Spleen (tissue), 13 donors: ENCODE measurements at regions of chr1 and their contacts with region 1.

Region 1: DNA sequence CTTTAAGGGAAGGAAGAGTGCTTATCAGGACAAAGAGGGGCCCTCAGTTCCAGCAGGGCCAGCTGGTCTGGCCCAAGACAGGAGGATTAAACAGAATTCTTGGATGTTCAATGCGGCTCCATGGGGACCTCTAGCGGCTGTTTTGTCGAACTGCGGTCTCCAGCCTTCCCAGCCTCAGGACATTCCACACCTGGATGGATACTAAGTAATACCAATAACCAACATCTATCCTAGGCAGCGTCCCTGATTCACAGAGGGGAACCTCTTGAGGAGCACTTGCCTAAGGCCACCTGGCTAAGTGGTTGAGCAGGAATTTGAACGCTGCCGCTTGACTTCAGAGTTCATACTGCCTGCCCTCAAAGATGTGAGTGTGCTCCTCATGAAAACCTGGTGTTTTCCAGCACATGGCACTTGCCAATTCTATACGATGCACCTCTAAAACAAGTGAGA is 15.5 kb upstream of the CD247 start:
- DNase-seq: peak; percentile 80
- H3K4me3 ChIP-seq: no peak overlapping the region
- H3K27ac ChIP-seq: no peak overlapping the region
- H3K4me1 ChIP-seq: peaks cover 0 to 5% (median 2%) of the 10 kb centered on the region in 6 donors
- H3K27me3 ChIP-seq: no peaks in the 10 kb centered on the region
- CTCF ChIP-seq: peak; percentile 48 to 93 (median 85)
- POLR2A ChIP-seq: no peak

Region 2: DNA sequence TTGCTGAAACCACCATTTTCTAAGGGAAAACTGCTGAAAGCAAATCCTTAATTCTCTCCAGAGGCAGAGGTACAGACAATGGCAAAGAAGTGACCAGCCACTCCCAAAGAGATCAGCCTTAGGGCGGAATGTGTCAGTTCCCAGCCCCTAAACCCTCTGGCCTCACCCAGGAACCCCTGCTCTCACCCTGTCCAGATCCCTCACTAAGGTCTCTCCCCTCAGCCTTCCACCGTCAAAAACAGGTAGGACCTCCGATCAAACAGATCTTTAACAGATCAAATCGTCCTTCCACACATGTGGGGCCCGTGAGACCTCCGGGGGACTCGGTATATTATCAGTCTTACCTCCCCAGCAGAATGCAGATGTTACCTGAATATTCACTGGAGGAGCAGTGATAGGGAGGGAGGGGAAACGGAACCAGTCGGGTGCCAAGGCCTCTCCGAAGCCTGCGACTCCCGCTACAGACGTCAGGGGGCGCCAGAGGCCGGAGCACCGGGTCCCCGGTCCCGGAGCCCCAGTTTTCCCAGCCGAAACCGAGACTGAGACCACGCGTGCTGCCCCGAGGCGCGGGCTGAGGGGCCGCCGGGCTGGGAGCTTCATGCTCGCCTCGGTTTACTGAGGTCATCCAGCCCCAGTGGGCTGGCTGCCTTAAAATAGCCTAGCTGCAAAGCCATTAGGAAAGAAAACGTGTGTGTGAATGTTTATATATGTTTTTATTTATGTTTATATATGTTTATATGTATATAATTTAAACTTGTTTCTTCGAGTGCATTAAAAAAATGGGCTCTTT is 467.3 kb before region 1 on chr1:
- intact Hi-C with region 1: loop called (anchors 5 kb)
- DNase-seq: peak; percentile 96
- H3K4me3 ChIP-seq: peak overlapping the region in 3 of 8 donors; percentile 14 to 52 (median 25)
- H3K27ac ChIP-seq: no peak overlapping the region
- H3K4me1 ChIP-seq: peaks cover 0 to 11% (median 5%) of the 10 kb centered on the region in 6 donors
- H3K27me3 ChIP-seq: no peaks in the 10 kb centered on the region
- CTCF ChIP-seq: peak; percentile 74 to 99 (median 97)
- POLR2A ChIP-seq: no peak

Region 3: GRCh38 chr1:167263819-167264464 is 269.9 kb before region 1 on chr1:
- intact Hi-C with region 1: loop called (anchors 5 kb)
- DNase-seq: no peak
- H3K4me3 ChIP-seq: no peak overlapping the region
- H3K27ac ChIP-seq: peak overlapping the region in 4 of 8 donors; percentile 31 to 42 (median 35)
- H3K4me1 ChIP-seq: peaks cover 11 to 87% (median 58%) of the 10 kb centered on the region in 6 donors
- H3K27me3 ChIP-seq: no peaks in the 10 kb centered on the region
- CTCF ChIP-seq: no peak
- POLR2A ChIP-seq: no peak

Region 4: GRCh38 chr1:167401260-167401873 is 132.5 kb before region 1 on chr1:
- intact Hi-C with region 1: loop called (anchors 5 kb)
- DNase-seq: no peak
- H3K4me3 ChIP-seq: no peak overlapping the region
- H3K27ac ChIP-seq: no peak overlapping the region
- H3K4me1 ChIP-seq: peaks cover 0 to 3% (median 0%) of the 10 kb centered on the region in 6 donors
- H3K27me3 ChIP-seq: no peaks in the 10 kb centered on the region
- CTCF ChIP-seq: peak in 9 of 11 experiments; percentile 26 to 60 (median 50)
- POLR2A ChIP-seq: no peak

Region 5: GRCh38 chr1:167442124-167442848 is 91.6 kb before region 1 on chr1:
- intact Hi-C with region 1: loop called (anchors 5 kb)
- DNase-seq: peak; percentile 96
- H3K4me3 ChIP-seq: no peak overlapping the region
- H3K27ac ChIP-seq: peak overlapping the region in 3 of 8 donors; percentile 0 to 57 (median 28)
- H3K4me1 ChIP-seq: peaks cover 11 to 72% (median 36%) of the 10 kb centered on the region in 6 donors
- H3K27me3 ChIP-seq: peaks cover 0 to 20% (median 2%) of the 10 kb centered on the region in 7 donors
- CTCF ChIP-seq: peak; percentile 78 to 95 (median 88)
- POLR2A ChIP-seq: no peak